ENCODE measurements at regions of chr22 and their contacts with region 1.

Region 1: GRCh38 chr22:36017651-36018091 is 11.0 kb downstream of the RBFOX2 start:
- DNase-seq: no peak
- ATAC-seq: peak in 1 of 8 donors; percentile 38
- H3K4me3 ChIP-seq: no peak overlapping the region
- H3K27ac ChIP-seq: peak overlapping the region in 1 of 10 donors; percentile 35
- H3K4me1 ChIP-seq: peaks cover 4 to 77% (median 54%) of the 10 kb centered on the region in 9 donors
- H3K27me3 ChIP-seq: no peaks in the 10 kb centered on the region
- CTCF ChIP-seq: no peak

Region 2: DNA sequence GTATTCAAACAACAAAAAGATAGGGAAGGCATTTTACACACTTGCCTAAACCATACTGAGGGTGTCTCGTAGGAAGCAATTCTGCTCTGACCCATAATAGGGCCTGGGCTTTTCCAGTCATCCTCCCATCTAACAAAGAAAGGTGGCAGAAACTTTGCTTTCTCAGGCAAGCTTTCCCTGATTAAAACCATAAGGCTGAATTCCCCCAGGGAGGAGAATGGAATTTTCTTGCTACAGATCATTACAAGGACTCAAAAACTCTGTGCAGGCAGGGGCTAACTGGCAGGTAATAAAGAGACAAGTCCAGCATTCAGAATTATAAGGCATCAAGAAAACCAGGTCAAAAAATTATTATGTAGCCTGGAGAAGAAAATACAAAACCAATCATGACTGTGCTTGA is 79.4 kb before region 1 on chr22:
- intact Hi-C with region 1: loop called in 2 of 10 experiments (anchors 5 to 10 kb)
- DNase-seq: no peak
- ATAC-seq: no peak
- H3K4me3 ChIP-seq: no peak overlapping the region
- H3K27ac ChIP-seq: no peak overlapping the region
- H3K4me1 ChIP-seq: peaks cover 0 to 19% (median 0%) of the 10 kb centered on the region in 9 donors
- H3K27me3 ChIP-seq: no peaks in the 10 kb centered on the region
- CTCF ChIP-seq: no peak

Region 3: DNA sequence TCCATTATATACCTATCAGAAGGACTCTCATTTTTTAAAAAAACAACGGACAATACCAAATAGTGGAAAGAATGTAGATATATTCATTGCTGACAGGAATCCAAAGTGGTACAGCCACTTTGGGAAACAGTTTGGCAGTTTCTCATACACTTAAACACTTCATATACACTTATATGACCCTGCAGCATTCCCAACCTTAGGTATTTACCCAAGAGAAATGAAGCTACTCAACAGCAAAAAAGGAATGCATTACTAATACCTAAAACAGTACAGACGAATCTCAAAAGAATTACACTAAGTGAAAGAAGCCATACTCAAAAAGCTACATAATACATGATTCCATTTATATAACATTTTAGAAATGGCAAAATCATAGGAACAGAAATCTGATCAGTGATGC is 40.5 kb before region 1 on chr22:
- intact Hi-C with region 1: loop called in 2 of 10 experiments (anchors 5 to 10 kb)
- DNase-seq: no peak
- ATAC-seq: no peak
- H3K4me3 ChIP-seq: no peak overlapping the region
- H3K27ac ChIP-seq: no peak overlapping the region
- H3K4me1 ChIP-seq: peaks cover 13 to 87% (median 45%) of the 10 kb centered on the region in 9 donors
- H3K27me3 ChIP-seq: no peaks in the 10 kb centered on the region
- CTCF ChIP-seq: no peak

Region 4: DNA sequence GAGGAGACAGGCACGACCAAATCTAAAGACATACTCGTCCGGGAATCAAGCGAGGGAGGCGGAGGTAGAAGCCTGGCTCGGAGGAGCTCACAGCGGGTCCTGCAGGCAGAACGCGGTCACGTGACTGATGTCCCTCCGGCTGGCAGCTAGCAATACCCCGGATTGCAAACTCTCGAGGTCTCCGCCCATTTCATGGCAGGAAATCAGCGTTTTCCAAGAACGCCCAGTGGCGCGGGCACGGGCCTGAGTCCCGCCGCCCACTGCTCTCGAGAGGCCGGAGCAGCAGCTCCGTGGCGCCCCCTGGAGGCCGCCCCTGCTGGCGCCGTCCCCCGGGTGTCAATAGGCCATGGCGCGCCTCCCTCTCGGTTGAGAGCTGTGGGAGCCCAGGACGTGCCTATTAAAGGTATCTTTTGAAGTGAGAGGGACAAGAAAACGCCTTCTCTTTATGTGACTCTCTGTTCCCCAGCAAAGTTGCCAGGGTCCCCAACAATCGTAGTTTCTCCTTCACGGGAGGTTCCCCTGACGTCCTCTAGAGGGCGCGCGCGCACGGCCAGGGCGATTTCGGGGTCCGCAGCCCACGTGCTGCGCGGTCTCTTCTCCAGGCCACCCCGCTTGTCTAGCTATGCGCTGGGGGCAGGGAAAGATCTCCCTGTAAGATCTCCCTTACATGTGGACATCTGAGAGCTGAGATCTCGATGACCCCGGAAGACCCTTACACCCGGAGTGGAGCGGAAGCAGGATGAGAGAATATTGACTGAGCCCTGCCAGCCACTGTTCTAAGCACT is 48.3 kb after region 1 on chr22:
- intact Hi-C with region 1: no loop called
- DNase-seq: peak; percentile 87 to 92
- ATAC-seq: peak; percentile 88 to 96 (median 95)
- H3K4me3 ChIP-seq: peak overlapping the region; percentile 30 to 73 (median 57)
- H3K27ac ChIP-seq: peak overlapping the region; percentile 66 to 93 (median 86)
- H3K4me1 ChIP-seq: peaks cover 0 to 19% (median 7%) of the 10 kb centered on the region in 9 donors
- H3K27me3 ChIP-seq: no peaks in the 10 kb centered on the region
- CTCF ChIP-seq: peak; percentile 99 to 100 (median 100)

Region 5: DNA sequence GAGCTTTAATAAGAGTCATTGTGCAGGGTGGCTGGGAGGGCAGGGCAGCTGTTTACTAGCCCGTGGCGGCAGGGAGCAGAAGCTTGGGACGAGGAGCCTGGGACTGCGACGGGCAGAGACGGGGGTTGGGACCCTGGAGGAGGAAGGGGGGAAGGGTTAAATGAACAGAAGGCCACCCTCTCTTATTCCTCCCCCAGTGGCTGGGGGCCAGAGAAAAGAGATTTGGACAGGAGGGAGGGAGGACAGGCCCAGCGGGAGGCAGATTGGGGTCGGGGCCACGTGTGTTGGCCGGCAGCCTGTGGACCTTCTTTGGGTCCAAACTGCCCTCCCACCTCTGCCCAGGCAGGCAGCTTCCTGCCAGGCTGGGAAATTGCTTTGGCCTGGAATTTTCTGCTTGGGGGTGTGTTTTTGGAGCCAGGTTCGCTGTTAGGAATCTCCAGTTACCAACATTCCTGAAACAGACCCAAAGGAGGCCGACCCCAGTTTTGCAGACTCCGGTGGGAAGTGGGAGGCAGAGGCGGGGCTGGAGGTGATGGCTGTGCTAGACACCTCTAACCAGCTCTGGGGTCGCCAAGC is 92.7 kb after region 1 on chr22:
- intact Hi-C with region 1: no loop called
- DNase-seq: no peak
- ATAC-seq: peak in 1 of 8 donors; percentile 27
- H3K4me3 ChIP-seq: no peak overlapping the region
- H3K27ac ChIP-seq: no peak overlapping the region
- H3K4me1 ChIP-seq: peaks cover 0 to 9% (median 0%) of the 10 kb centered on the region in 9 donors
- H3K27me3 ChIP-seq: peaks cover 0 to 3% (median 0%) of the 10 kb centered on the region in 7 donors
- CTCF ChIP-seq: no peak